IMR-90 (cell line): ENCODE measurements at regions of chr6 and their contacts with region 1.

Region 1: DNA sequence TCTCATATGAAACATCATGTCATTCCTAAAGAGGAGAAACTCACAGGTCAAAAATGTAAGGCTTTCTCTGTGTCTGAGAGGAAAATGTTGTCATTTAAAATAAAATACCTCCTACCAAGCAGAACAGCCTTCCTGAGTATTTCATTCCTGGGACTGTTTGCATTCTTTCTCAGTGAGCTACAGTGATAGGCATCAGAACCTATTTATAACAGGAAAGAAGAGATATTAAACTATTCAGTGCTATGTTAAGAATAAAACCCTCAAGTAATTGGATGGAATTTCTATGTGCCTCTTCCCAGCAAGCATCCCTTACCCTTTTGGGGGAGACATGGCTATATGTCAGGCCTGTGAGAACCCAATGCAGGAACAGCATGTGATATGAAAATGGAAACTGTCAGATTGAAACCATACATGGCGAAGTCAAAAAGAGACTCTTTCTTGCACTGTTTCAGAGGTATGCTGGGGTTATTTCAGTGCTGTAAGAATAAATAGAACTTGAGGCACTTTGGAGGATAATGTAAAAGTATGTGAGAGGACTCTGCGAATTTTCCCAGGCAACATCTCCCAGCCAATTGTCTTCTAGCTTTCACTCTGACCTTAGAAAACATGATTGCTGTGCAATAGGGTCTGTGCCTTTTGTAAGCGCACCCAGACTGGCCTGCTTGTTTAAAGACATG is 133.8 kb upstream of the CCN2 start:
- DNase-seq: peak; percentile 99
- ATAC-seq: peak; percentile 93
- H3K4me3 ChIP-seq: peak overlapping the region; percentile 2; the same call in 1 of the 2 replicates
- H3K27ac ChIP-seq: peak overlapping the region; percentile 95
- H3K4me1 ChIP-seq: peaks cover 18% of the 10 kb centered on the region
- H3K27me3 ChIP-seq: no peaks in the 10 kb centered on the region
- CTCF ChIP-seq: no peak
- POLR2A ChIP-seq: no peak
- RAD21 ChIP-seq: peak; percentile 15

Region 2: DNA sequence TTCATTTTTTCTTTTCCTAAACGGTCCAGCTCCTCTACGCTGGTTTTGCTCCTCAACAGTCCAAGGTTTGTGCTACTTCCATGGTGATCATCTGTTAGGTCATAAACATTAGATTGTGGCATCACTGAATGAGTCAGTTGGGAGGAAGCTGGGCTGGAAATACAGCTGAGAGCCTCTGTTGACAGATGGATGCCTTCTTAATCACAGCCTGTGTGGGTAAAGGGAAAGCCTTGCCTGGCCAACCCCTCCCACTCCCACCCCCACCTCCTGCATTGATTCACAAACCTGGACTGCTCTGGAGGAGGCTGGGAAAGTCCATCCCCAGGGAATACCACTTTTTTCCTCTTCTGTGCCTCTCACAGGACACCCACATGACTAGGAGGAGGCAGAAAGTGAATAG is 46.8 kb after region 1 on chr6:
- CTCF ChIA-PET with region 1: no interaction called
- POLR2A ChIA-PET with region 1: no interaction called
- dilution Hi-C with region 1: no loop called
- in situ Hi-C with region 1: no loop called
- intact Hi-C with region 1: loop called (anchors 2 kb)
- DNase-seq: peak; percentile 100
- ATAC-seq: peak; percentile 80
- H3K4me3 ChIP-seq: no peak overlapping the region
- H3K27ac ChIP-seq: peak overlapping the region; percentile 96; the same call in 1 of the 2 replicates
- H3K4me1 ChIP-seq: peaks cover 26% of the 10 kb centered on the region
- H3K27me3 ChIP-seq: no peaks in the 10 kb centered on the region
- CTCF ChIP-seq: no peak
- POLR2A ChIP-seq: peak; percentile 60
- RAD21 ChIP-seq: no peak; the same call in 1 of the 2 replicates

Region 3: DNA sequence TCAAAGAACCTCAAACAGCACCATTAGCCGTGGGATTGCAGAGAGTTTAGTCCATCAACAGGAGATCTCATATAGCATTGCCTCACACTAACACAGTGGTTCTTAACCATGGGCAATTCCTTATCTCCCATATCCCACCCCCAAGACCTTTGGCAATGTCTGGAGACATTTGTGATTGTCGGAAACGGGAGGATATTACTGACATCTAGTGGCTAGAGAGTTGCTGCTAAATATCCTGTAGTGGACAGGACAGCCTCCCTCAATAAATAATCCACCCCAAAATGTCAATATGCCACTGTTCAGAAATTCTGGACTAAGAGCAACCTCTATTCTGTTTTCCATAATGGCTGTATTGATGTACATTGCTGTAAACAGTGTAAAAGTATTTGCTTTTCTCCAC is 76.3 kb after region 1 on chr6:
- CTCF ChIA-PET with region 1: no interaction called
- POLR2A ChIA-PET with region 1: no interaction called
- dilution Hi-C with region 1: no loop called
- in situ Hi-C with region 1: no loop called
- intact Hi-C with region 1: loop called (anchors 2 kb)
- DNase-seq: peak; percentile 80
- ATAC-seq: peak; percentile 89
- H3K4me3 ChIP-seq: no peak overlapping the region
- H3K27ac ChIP-seq: no peak overlapping the region
- H3K4me1 ChIP-seq: no peaks in the 10 kb centered on the region; the same call in 1 of the 2 replicates
- H3K27me3 ChIP-seq: no peaks in the 10 kb centered on the region
- CTCF ChIP-seq: peak; percentile 72
- POLR2A ChIP-seq: peak; percentile 46; the same call in 1 of the 2 replicates
- RAD21 ChIP-seq: peak; percentile 88

Region 4: DNA sequence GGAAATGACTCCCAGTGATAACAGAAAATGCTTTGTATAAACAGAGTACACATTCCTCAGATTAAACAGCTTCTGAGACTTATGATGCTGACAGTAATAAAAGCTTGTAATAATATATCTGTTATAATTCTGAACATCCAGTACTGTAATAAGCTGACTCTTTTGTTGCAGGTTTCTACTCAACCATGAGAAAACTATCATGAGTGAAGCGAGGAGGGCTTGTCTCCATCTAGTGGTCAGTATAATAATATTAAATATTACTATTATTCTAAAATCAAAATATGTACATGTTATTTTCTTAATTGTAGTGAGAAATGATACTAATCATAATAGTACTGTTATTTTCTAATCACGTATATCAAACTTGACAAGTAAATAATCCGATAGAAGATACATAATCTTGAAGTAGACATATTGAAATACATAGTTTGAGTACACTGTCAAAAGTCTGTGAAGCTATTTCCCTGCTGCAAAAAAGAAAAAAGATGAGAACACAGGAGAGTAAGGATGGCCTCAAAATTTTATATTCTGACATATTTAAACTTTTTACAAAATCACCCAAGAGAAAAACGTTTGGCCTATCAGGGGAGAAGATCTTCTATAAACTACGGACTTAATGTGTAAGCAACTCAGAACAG is 133.2 kb after region 1 on chr6:
- CTCF ChIA-PET with region 1: no interaction called
- POLR2A ChIA-PET with region 1: no interaction called
- dilution Hi-C with region 1: no loop called
- in situ Hi-C with region 1: no loop called
- intact Hi-C with region 1: loop called (anchors 2 kb)
- DNase-seq: peak; percentile 68
- ATAC-seq: peak; percentile 82
- H3K4me3 ChIP-seq: no peak overlapping the region
- H3K27ac ChIP-seq: no peak overlapping the region
- H3K4me1 ChIP-seq: no peaks in the 10 kb centered on the region; the same call in 1 of the 2 replicates
- H3K27me3 ChIP-seq: no peaks in the 10 kb centered on the region
- CTCF ChIP-seq: peak; percentile 66
- POLR2A ChIP-seq: no peak
- RAD21 ChIP-seq: peak; percentile 77

Region 5: DNA sequence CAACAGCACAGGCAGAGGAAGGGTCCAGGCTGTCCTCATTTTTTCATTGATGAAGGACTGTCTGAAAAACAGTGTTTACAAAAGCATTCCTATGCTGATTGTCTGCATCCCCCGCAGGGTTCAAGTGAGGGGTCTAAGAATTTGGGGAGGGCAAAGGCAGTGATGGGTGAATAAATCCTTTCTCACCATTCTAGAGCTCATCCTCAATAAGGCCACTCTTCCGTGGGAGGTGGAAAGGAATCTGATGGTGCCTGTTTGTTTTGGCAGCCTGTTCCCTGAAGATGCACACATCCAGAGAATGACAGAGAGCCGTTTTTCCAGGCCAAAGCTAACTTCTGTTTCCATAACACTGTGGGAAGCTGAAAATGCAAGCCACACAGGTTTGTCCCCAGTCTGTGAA is 151.8 kb after region 1 on chr6:
- CTCF ChIA-PET with region 1: no interaction called
- POLR2A ChIA-PET with region 1: no interaction called
- dilution Hi-C with region 1: no loop called
- in situ Hi-C with region 1: no loop called
- intact Hi-C with region 1: no loop called
- DNase-seq: peak; percentile 51
- ATAC-seq: peak; percentile 65
- H3K4me3 ChIP-seq: no peak overlapping the region
- H3K27ac ChIP-seq: no peak overlapping the region
- H3K4me1 ChIP-seq: peaks cover 6% of the 10 kb centered on the region
- H3K27me3 ChIP-seq: no peaks in the 10 kb centered on the region
- CTCF ChIP-seq: no peak
- POLR2A ChIP-seq: no peak
- RAD21 ChIP-seq: no peak

Region 6: GRCh38 chr6:132259070-132259469 is 174.1 kb after region 1 on chr6:
- CTCF ChIA-PET with region 1: interaction called, 3 read pairs
- POLR2A ChIA-PET with region 1: no interaction called
- dilution Hi-C with region 1: no loop called
- in situ Hi-C with region 1: no loop called
- intact Hi-C with region 1: loop called (anchors 2 kb)
- DNase-seq: peak; percentile 58
- ATAC-seq: peak; percentile 66
- H3K4me3 ChIP-seq: no peak overlapping the region
- H3K27ac ChIP-seq: no peak overlapping the region
- H3K4me1 ChIP-seq: 0 out of 2 replicates have a peak, but pooled peaks cover 2% of the 10 kb centered on the region
- H3K27me3 ChIP-seq: peaks cover 1% of the 10 kb centered on the region; the same call in 1 of the 2 replicates
- CTCF ChIP-seq: peak; percentile 54
- POLR2A ChIP-seq: no peak
- RAD21 ChIP-seq: peak; percentile 70

Region 7: DNA sequence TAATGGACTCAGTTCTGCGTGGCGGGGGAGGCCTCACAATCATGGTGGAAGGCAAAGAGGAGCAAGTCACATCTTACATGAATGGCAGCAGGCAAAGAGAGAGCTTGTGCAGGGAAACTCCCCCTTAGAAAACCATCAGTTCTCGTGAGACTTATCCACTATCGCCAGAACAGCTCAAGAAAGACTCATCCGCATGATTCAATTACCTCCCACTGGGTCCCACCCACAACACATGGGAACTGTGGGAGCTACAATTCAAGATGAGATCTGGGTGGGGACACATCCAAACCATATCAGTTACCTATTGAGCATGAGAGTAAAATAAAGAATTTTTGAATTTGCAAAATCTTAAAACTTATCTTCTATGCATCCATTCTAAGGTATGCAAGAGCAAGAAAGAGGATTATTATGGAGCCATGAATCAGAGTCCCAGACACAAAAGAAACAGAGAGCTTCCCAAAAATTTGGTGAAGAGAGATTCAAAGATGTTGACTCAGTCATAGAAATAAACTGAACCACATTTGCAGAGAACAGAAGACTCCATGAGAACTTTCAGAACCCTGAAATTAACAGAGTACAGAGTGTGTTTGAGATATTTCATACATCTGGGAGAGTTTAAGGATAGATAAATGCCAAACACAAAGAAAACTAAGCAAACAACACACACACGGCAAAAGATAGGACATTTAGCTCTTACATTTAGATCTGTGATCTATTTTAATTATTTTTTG is 333.4 kb after region 1 on chr6:
- CTCF ChIA-PET with region 1: no interaction called
- POLR2A ChIA-PET with region 1: no interaction called
- dilution Hi-C with region 1: no loop called
- in situ Hi-C with region 1: no loop called
- intact Hi-C with region 1: no loop called
- DNase-seq: no peak
- ATAC-seq: no peak
- H3K4me3 ChIP-seq: no peak overlapping the region
- H3K27ac ChIP-seq: no peak overlapping the region
- H3K4me1 ChIP-seq: no peaks in the 10 kb centered on the region
- H3K27me3 ChIP-seq: no peaks in the 10 kb centered on the region
- CTCF ChIP-seq: no peak
- POLR2A ChIP-seq: no peak
- RAD21 ChIP-seq: no peak

Region 8: DNA sequence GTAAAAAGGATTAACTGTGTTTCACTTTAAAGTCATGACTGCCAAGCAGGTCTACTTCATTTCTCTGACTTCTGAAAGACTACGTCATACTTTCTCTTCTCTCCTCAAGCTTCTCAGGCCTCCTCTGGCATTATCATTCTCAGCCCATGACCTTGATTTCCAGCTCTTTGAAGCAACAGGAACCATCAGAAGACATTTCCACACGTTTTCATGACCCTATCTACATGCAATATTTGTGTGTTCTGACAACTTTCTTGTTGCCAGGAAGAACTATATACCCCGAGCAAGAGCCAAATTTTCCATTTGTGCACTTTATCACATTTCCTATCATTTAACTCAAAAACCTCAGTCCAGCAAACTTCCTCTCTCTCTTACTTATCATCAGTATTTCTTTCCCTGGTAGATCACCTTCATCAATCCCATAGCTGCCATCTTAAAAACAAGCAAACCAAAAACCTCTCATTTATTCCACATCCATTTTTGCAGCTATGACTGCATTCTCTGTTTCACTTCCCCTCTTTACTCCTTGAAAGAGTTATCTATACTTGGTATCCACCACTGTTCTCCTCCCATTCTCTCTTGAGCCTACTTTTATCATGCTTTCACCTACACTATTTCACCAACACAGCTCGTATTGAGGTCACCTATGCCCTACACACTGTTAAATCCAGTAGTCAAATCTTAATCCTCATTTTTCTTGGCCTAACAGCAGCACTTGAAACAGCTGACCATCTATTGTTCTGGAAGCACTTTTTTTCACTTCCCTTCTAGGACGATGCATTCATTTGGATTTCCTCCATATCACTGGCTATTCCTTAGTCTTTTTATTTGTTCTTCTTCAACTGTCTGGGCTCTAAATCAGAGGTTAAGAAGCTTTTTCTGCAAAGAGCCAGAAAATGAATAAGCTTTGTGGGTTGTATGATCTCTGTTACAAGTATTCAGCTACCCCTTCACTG is 380.8 kb after region 1 on chr6:
- CTCF ChIA-PET with region 1: no interaction called
- POLR2A ChIA-PET with region 1: no interaction called
- dilution Hi-C with region 1: no loop called
- in situ Hi-C with region 1: no loop called
- intact Hi-C with region 1: no loop called
- DNase-seq: no peak
- ATAC-seq: no peak
- H3K4me3 ChIP-seq: no peak overlapping the region
- H3K27ac ChIP-seq: no peak overlapping the region
- H3K4me1 ChIP-seq: peaks cover 13% of the 10 kb centered on the region
- H3K27me3 ChIP-seq: no peaks in the 10 kb centered on the region
- CTCF ChIP-seq: no peak
- POLR2A ChIP-seq: no peak
- RAD21 ChIP-seq: no peak

Region 9: DNA sequence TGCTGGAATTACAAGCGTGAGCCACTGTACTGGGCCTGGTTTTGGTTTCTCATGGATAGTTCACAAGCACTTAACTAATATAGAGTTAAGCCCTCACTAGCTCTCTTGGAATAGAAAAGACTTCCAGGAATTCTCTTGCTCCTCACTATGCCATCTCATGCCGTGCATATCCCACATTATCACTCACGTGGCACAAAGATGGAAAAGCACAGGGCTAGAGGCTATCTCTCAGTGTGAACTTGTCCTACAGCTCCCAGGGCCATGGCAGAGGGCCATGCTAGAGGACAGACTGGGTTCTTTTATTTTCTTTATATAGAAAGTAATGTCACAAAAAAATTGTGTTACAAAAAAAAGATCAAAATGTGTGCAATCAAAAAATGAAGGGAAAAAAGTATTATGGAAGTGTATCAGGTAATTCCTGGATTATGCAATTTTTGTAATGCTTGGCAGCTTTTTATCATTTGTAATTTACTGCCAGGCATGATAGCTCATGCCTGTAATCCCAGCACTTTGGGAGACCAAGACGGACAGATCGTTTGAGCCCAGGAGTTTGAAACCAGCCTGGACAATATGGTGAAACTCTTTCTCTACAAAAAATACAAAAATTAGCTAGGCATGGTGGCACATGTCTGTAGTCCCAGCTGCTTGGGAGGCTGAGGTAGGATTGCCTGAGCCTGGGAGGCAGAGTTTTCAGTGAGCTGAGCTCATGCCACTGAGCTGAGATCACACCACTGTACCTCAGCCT is 1973.8 kb after region 1 on chr6:
- CTCF ChIA-PET with region 1: no interaction called
- POLR2A ChIA-PET with region 1: no interaction called
- dilution Hi-C with region 1: no loop called
- in situ Hi-C with region 1: no loop called
- intact Hi-C with region 1: no loop called
- DNase-seq: peak; percentile 20
- ATAC-seq: no peak
- H3K4me3 ChIP-seq: no peak overlapping the region
- H3K27ac ChIP-seq: peak overlapping the region; percentile 45; the same call in 1 of the 2 replicates
- H3K4me1 ChIP-seq: peaks cover 24% of the 10 kb centered on the region
- H3K27me3 ChIP-seq: no peaks in the 10 kb centered on the region
- CTCF ChIP-seq: no peak
- POLR2A ChIP-seq: no peak
- RAD21 ChIP-seq: no peak